PC-9 (cell line): ENCODE measurements at regions of chr17 and their contacts with region 1.

Region 1: DNA sequence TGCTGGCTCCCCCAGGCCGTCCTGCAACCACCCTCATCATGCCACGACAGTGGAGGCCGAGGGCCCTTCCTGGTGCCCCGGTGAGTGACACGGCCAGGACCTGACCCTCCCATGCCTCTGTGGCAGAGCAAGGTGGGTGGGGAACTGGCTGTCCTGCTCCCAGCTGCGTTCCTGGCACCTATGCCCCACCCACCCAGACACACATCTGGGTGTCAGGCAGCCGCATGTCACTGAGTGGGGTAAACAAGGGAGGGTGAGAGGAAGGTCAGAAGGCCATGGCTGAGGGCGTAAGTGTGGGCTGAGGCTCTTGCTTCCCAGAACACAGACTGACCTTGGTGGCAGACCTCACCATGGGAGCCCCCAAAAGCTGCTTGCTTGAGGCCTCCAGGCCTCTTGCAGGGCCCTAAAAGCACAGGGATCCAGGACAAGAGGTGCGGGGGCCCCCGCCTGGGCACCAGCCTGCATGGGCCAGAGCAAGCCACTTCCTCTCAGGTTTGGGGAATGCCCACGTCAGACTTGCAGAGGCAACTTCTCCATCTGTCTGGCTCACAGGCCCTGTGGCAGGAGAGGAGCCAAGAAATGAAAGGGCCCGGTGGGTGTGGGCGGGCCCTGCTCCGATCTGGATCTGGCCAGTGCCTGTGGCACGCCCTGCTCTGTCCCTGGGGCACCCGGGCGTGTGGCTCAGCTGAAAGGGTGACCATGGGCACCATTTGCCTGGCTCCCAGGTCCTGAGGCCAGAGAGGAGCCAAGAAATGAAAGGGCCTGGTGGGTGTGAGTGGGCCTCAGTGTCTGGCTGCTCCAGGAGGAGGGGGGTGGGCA is 3.9 kb upstream of the CCDC57 start:
- DNase-seq: peak; percentile 69 to 86
- H3K4me3 ChIP-seq: peak overlapping the region; percentile 11; the same call in 1 of the 2 replicates
- H3K27ac ChIP-seq: peak overlapping the region; percentile 92
- H3K4me1 ChIP-seq: peaks cover 33% of the 10 kb centered on the region
- H3K27me3 ChIP-seq: no peaks in the 10 kb centered on the region
- CTCF ChIP-seq: no peak

Region 2: GRCh38 chr17:82230627-82231311 is 14.3 kb after region 1 on chr17:
- CTCF ChIA-PET with region 1: no interaction called
- POLR2A ChIA-PET with region 1: no interaction called
- intact Hi-C with region 1: loop called (anchors 2 kb)
- DNase-seq: peak in 1 of 2 experiments; percentile 85
- H3K4me3 ChIP-seq: peak overlapping the region; percentile 72
- H3K27ac ChIP-seq: peak overlapping the region; percentile 32; the same call in 1 of the 2 replicates
- H3K4me1 ChIP-seq: peaks cover 40% of the 10 kb centered on the region
- H3K27me3 ChIP-seq: no peaks in the 10 kb centered on the region
- CTCF ChIP-seq: peak; percentile 46